ENCODE measurements at regions of chr11 and their contacts with region 1.

Region 1: DNA sequence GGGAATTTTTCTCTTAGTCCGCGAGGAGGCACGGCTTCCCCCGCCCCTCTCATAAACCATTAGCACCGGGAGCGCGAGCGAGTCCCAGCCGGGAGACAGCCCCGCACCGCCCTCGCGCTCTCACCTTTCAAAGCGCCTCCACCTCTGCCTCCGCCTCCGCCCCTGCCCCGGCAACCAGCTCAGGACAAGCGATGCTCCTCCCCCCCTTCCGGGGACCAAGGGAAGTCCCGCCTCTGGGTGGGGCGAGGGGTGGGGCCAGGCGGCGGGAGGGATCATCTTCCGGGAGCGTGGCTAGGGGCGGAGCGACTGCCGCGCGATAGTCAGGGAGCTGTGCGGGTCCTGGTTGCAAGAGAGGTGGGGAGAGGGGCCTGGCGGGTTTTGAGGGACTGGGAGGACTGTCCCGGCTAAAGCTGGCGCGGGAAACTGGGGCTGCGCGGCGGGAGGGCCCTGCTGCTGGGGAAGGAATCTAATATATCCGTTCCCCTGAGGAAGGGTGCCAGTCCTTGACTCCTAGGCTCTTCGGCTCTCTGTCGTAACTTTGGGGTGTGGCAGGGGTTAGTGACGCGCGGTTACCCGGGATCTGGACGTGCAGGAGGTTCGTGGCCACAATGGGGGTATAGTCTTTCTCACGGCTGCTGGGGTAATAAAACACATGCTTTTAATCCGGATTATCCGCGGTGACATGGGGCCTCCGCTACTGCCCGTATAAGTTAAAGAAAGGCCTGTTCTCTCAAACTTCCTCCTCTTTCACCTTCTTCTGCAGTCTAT is at the starts of genes CCDC82 and JRKL:
- DNase-seq: peak; percentile 99
- total RNA-seq, gene CCDC82: 16.4 TPM
- total RNA-seq, gene JRKL: 7.6 TPM

Region 2: GRCh38 chr11:95790123-95790932 is 599.6 kb before region 1 on chr11 and contains the start of gene CEP57:
- intact Hi-C with region 1: loop called (anchors 5 kb)
- DNase-seq: peak; percentile 98
- total RNA-seq, gene CEP57: 27.8 TPM

Region 3: GRCh38 chr11:95835768-95836488 is 554.0 kb before region 1 on chr11:
- intact Hi-C with region 1: loop called (anchors 5 kb)
- DNase-seq: no peak

Region 4: GRCh38 chr11:96694338-96694737 is 304.4 kb after region 1 on chr11:
- intact Hi-C with region 1: no loop called
- DNase-seq: no peak

Measured in cardiac septum (tissue), 1 donor.